Heart right ventricle (tissue), 16 donors: ENCODE measurements at regions of chr7 and their contacts with region 1.

Region 1: GRCh38 chr7:2863461-2864066 is 19.5 kb upstream of the GNA12 start:
- DNase-seq: peak; percentile 81 to 84
- ATAC-seq: peak; percentile 93 to 97 (median 94)
- H3K4me3 ChIP-seq: peak overlapping the region in 6 of 10 donors; percentile 16 to 29 (median 24)
- H3K27ac ChIP-seq: peak overlapping the region; percentile 64 to 96 (median 88)
- H3K4me1 ChIP-seq: peaks cover 0 to 31% (median 20%) of the 10 kb centered on the region in 9 donors
- H3K27me3 ChIP-seq: no peaks in the 10 kb centered on the region
- CTCF ChIP-seq: no peak

Region 2: DNA sequence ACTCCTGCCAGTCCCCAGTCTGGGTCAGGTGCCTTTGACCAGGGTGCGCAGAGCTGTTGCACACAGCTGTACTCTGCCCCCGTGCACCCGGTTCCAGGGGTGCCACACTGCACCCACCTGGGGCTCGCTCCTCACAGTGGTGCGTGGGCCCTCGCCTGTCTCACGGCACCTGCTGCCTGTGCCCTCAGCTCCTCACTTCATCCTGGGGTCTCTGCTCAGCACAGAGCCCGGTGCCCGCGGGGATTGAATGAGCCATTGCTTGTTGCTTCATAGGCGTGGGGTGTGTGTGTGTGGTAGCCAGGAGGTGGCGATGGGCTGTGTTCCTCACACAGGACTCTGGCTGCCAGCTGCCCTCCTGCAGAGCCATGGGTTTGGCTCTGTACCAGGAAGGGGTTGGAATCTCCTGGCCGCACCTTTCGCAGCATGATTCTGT is 490.4 kb before region 1 on chr7:
- intact Hi-C with region 1: no loop called
- DNase-seq: no peak
- ATAC-seq: peak in 5 of 8 donors; percentile 15 to 51 (median 34)
- H3K4me3 ChIP-seq: no peak overlapping the region
- H3K27ac ChIP-seq: no peak overlapping the region
- H3K4me1 ChIP-seq: no peaks in the 10 kb centered on the region
- H3K27me3 ChIP-seq: no peaks in the 10 kb centered on the region
- CTCF ChIP-seq: no peak

Region 3: GRCh38 chr7:2540641-2541051 is 322.9 kb before region 1 on chr7:
- intact Hi-C with region 1: no loop called
- DNase-seq: no peak
- ATAC-seq: peak in 1 of 8 donors; percentile 11
- H3K4me3 ChIP-seq: no peak overlapping the region
- H3K27ac ChIP-seq: no peak overlapping the region
- H3K4me1 ChIP-seq: no peaks in the 10 kb centered on the region
- H3K27me3 ChIP-seq: no peaks in the 10 kb centered on the region
- CTCF ChIP-seq: no peak

Region 4: GRCh38 chr7:3300651-3301378 is 437.3 kb after region 1 on chr7 and contains the start of gene SDK1:
- intact Hi-C with region 1: loop called in 1 of 10 experiments (anchors 10 kb)
- DNase-seq: peak; percentile 91 to 94
- ATAC-seq: peak; percentile 94 to 99 (median 98)
- H3K4me3 ChIP-seq: peak within 1 kb of the TSS; percentile 32 to 67 (median 56)
- H3K27ac ChIP-seq: peak within 1 kb of the TSS in 2 of 10 donors; percentile 19 to 49
- H3K4me1 ChIP-seq: peaks cover 0 to 24% (median 9%) of the 10 kb centered on the region in 9 donors
- H3K27me3 ChIP-seq: peaks cover 0 to 54% (median 16%) of the 10 kb centered on the region in 7 donors
- CTCF ChIP-seq: peak; percentile 79 to 97 (median 93)
- total RNA-seq, gene SDK1: 1.0 to 5.3 (median 3.7) TPM